ENCODE measurements at regions of chr11 and their contacts with region 1.

Region 1: DNA sequence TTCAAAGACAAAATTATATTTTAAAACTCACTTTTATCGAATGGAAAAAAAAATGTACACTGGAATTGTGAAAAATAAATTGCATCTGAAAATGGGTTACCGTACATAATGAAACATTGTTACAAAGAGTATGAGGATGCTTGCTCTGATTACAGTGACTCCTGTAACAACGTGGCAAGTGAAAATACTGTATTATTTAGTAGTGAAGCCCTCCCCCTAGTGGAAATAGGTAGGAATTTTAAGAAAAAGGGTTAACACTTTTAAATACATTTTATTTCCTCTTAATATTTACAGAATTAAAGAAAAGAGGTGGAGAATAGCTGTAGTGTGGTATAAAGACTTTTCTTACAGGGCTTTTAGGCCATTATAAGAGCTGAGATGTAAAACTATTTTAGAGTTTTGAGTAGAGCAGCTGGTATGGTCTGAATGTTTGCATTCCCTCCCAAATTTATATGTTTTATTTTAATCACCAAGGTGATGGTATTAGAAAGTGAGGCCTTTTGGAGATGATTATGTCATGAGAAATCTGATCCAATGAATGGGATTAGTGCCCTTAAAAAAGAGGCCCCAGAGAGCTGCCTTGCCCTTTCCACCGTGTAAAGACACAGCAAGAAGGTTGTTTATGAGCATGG is 25.2 kb downstream of the FAM76B start:
- DNase-seq: no peak
- ATAC-seq: peak; percentile 91
- H3K4me3 ChIP-seq: no peak overlapping the region
- H3K27ac ChIP-seq: no peak overlapping the region
- H3K4me1 ChIP-seq: no peaks in the 10 kb centered on the region
- H3K27me3 ChIP-seq: no peaks in the 10 kb centered on the region
- CTCF ChIP-seq: peak; percentile 43 to 66 (median 46); a peak in 5 of 6 replicates
- EP300 ChIP-seq: no peak
- POLR2A ChIP-seq: no peak
- RAD21 ChIP-seq: peak; percentile 83

Region 2: GRCh38 chr11:95577716-95578460 is 186.5 kb before region 1 on chr11:
- CTCF ChIA-PET with region 1: interaction called, 6 read pairs
- POLR2A ChIA-PET with region 1: no interaction called
- RAD21 ChIA-PET with region 1: interaction called, 3 read pairs
- SMC1A ChIA-PET with region 1: interaction called, 7 read pairs
- in situ Hi-C with region 1: no loop called
- intact Hi-C with region 1: loop called (anchors 5 kb)
- DNase-seq: no peak
- ATAC-seq: peak; percentile 85
- H3K4me3 ChIP-seq: no peak overlapping the region
- H3K27ac ChIP-seq: no peak overlapping the region
- H3K4me1 ChIP-seq: no peaks in the 10 kb centered on the region
- H3K27me3 ChIP-seq: no peaks in the 10 kb centered on the region
- CTCF ChIP-seq: peak; percentile 10 to 23 (median 11); a peak in 2 of 6 replicates
- EP300 ChIP-seq: no peak
- POLR2A ChIP-seq: no peak
- RAD21 ChIP-seq: peak; percentile 45; the same call in 1 of the 2 replicates

Region 3: DNA sequence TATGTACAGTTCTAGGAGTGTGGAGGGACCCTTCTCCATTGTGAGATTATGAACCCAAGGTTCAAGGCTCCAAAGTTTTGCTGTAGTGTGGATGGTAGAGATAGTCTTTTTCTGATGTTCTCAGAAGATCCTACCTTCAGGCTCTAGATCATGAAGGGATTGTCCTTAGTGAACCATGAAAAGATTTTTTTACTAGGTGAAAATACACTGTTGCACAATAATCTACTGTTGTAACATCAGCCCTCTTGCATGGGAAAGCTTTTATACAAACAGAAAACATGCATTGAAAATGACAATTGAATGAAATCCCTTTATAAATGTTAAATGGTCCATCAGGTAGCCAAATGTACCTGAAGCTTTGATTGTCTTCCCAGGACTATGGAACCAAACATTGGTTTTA is 152.6 kb before region 1 on chr11:
- CTCF ChIA-PET with region 1: no interaction called
- POLR2A ChIA-PET with region 1: no interaction called
- RAD21 ChIA-PET with region 1: no interaction called
- SMC1A ChIA-PET with region 1: no interaction called
- in situ Hi-C with region 1: no loop called
- intact Hi-C with region 1: no loop called
- DNase-seq: no peak
- ATAC-seq: no peak
- H3K4me3 ChIP-seq: no peak overlapping the region
- H3K27ac ChIP-seq: no peak overlapping the region
- H3K4me1 ChIP-seq: no peaks in the 10 kb centered on the region
- H3K27me3 ChIP-seq: peaks cover 0 to 2% of the 10 kb centered on the region in 2 experiments; a peak in 1 of 4 replicates
- CTCF ChIP-seq: no peak
- EP300 ChIP-seq: no peak
- POLR2A ChIP-seq: no peak
- RAD21 ChIP-seq: no peak

Region 4: GRCh38 chr11:95739108-95739938 is 25.1 kb before region 1 on chr11:
- CTCF ChIA-PET with region 1: interaction called, 4 read pairs
- POLR2A ChIA-PET with region 1: no interaction called
- RAD21 ChIA-PET with region 1: interaction called, 3 read pairs
- SMC1A ChIA-PET with region 1: interaction called, 11 read pairs
- in situ Hi-C with region 1: no loop called
- intact Hi-C with region 1: no loop called
- DNase-seq: no peak
- ATAC-seq: peak; percentile 76
- H3K4me3 ChIP-seq: no peak overlapping the region
- H3K27ac ChIP-seq: no peak overlapping the region
- H3K4me1 ChIP-seq: no peaks in the 10 kb centered on the region
- H3K27me3 ChIP-seq: no peaks in the 10 kb centered on the region
- CTCF ChIP-seq: peak in 2 of 3 experiments; percentile 28 to 31; a peak in 2 of 6 replicates
- EP300 ChIP-seq: no peak
- POLR2A ChIP-seq: no peak
- RAD21 ChIP-seq: peak; percentile 13; the same call in 1 of the 2 replicates

Region 5: GRCh38 chr11:95778699-95779098 is 14.3 kb after region 1 on chr11:
- CTCF ChIA-PET with region 1: interaction called, 14 read pairs
- POLR2A ChIA-PET with region 1: no interaction called
- RAD21 ChIA-PET with region 1: interaction called, 5 read pairs
- SMC1A ChIA-PET with region 1: interaction called, 7 read pairs
- in situ Hi-C with region 1: no loop called
- intact Hi-C with region 1: no loop called
- DNase-seq: no peak
- ATAC-seq: peak; percentile 77
- H3K4me3 ChIP-seq: no peak overlapping the region
- H3K27ac ChIP-seq: no peak overlapping the region
- H3K4me1 ChIP-seq: peaks cover 6% of the 10 kb centered on the region; the same call in 1 of the 2 replicates
- H3K27me3 ChIP-seq: no peaks in the 10 kb centered on the region
- CTCF ChIP-seq: no peak
- EP300 ChIP-seq: no peak
- POLR2A ChIP-seq: no peak
- RAD21 ChIP-seq: no peak

Region 6: DNA sequence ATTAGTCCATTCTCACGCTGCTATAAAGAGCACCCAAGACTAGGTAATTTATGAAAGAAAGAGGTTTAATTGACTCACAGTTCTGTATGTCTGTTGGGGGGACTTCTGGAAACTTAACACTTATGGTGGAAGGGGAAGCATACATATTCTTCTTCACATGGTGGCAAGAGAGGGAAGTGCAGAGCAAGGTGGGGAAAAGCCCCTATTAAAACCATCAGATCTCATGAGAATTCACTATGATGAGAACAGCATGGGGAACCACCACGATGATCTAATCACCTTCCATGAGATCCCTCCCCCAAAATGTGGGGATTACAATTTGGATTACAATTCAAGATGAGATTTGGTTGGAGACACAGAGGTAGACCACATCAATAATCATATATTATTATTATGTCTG is 51.7 kb after region 1 on chr11:
- CTCF ChIA-PET with region 1: no interaction called
- POLR2A ChIA-PET with region 1: no interaction called
- RAD21 ChIA-PET with region 1: no interaction called
- SMC1A ChIA-PET with region 1: no interaction called
- in situ Hi-C with region 1: no loop called
- intact Hi-C with region 1: no loop called
- DNase-seq: no peak
- ATAC-seq: peak; percentile 94
- H3K4me3 ChIP-seq: no peak overlapping the region
- H3K27ac ChIP-seq: no peak overlapping the region
- H3K4me1 ChIP-seq: no peaks in the 10 kb centered on the region
- H3K27me3 ChIP-seq: no peaks in the 10 kb centered on the region
- CTCF ChIP-seq: no peak
- EP300 ChIP-seq: no peak
- POLR2A ChIP-seq: no peak
- RAD21 ChIP-seq: no peak